T-cell (primary cell): ENCODE measurements at regions of chr16 and their contacts with region 1.

Region 1: DNA sequence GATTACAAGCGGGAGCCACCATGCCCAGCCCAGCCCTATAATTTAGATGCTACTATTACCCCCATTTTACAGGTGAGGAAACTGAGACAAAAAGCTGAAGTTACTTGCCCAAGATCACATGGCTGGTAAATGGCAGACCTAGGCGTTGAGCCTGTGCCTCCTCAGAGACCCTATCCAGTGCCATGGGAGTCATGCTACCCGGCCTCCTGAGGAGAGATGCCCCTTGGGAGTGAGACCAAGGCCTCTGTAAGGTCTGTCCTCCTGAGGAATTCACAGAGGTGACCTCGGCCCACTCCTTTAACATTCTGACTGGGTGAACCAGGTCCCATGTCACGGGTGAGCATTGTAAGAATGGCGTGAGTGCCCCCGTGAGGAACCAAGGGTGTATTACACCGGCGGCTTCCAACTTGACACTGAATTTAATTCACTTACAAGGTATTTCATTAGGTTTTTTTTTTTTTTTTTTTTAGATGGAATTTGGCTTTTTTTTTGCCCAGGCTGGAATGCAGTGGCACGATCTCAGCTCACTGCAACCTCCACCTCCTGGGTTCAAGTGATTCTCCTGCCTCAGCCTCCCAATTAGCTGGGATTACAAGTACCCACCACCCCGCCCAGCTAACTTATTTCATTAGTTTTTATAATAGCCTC is 95.7 kb downstream of the ABCC6 start:
- DNase-seq: peak; percentile 23 to 78 (median 57)
- ATAC-seq: peak; percentile 73 to 85 (median 82)
- H3K4me3 ChIP-seq: no peak overlapping the region
- H3K4me3 Mint-ChIP-seq: no peak overlapping the region
- H3K27ac ChIP-seq: no peak overlapping the region
- H3K27ac Mint-ChIP-seq: peak overlapping the region in 1 of 2 donors; percentile 16
- H3K4me1 ChIP-seq: no peaks in the 10 kb centered on the region
- H3K4me1 Mint-ChIP-seq: peaks cover 0 to 2% (median 2%) of the 10 kb centered on the region in 3 donors
- H3K27me3 ChIP-seq: no peaks in the 10 kb centered on the region
- H3K27me3 Mint-ChIP-seq: no peaks in the 10 kb centered on the region

Region 2: DNA sequence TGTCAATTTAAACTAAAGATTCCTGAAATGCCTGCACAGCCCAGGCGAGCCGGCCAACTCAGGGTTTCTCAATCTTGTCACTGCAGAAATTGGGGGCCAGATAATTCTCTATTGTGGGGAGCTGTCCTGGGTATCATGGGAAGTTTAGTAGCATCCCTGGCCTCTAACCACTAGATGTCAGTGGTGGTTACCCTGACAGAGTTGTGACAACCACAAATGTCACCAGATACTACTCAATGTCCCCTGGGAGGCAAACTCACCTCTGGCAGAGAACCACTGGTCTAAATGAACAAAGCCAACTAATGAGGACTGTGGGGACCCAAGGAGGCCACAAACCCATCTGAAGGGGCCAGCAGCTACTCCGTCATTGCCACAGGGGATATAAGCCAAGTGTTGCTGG is 361.7 kb before region 1 on chr16:
- CTCF ChIA-PET with region 1: interaction called in 1 of 2 experiments, 11 read pairs
- POLR2A ChIA-PET with region 1: no interaction called
- DNase-seq: peak in 17 of 35 experiments; percentile 1 to 59 (median 12)
- ATAC-seq: peak; percentile 32 to 67 (median 59)
- H3K4me3 ChIP-seq: no peak overlapping the region
- H3K4me3 Mint-ChIP-seq: no peak overlapping the region
- H3K27ac ChIP-seq: no peak overlapping the region
- H3K27ac Mint-ChIP-seq: no peak overlapping the region
- H3K4me1 ChIP-seq: no peaks in the 10 kb centered on the region
- H3K4me1 Mint-ChIP-seq: no peaks in the 10 kb centered on the region
- H3K27me3 ChIP-seq: peaks cover 0 to 11% of the 10 kb centered on the region in 2 experiments
- H3K27me3 Mint-ChIP-seq: peaks cover 12 to 18% of the 10 kb centered on the region in 2 donors

Region 3: GRCh38 chr16:16099320-16099719 is 28.3 kb before region 1 on chr16:
- CTCF ChIA-PET with region 1: no interaction called
- POLR2A ChIA-PET with region 1: no interaction called
- DNase-seq: no peak
- ATAC-seq: no peak
- H3K4me3 ChIP-seq: no peak overlapping the region
- H3K4me3 Mint-ChIP-seq: no peak overlapping the region
- H3K27ac ChIP-seq: no peak overlapping the region
- H3K27ac Mint-ChIP-seq: no peak overlapping the region
- H3K4me1 ChIP-seq: no peaks in the 10 kb centered on the region
- H3K4me1 Mint-ChIP-seq: no peaks in the 10 kb centered on the region
- H3K27me3 ChIP-seq: no peaks in the 10 kb centered on the region
- H3K27me3 Mint-ChIP-seq: no peaks in the 10 kb centered on the region

Region 4: GRCh38 chr16:16109453-16110108 is 18.0 kb before region 1 on chr16:
- CTCF ChIA-PET with region 1: no interaction called
- POLR2A ChIA-PET with region 1: no interaction called
- DNase-seq: no peak
- ATAC-seq: no peak
- H3K4me3 ChIP-seq: no peak overlapping the region
- H3K4me3 Mint-ChIP-seq: no peak overlapping the region
- H3K27ac ChIP-seq: no peak overlapping the region
- H3K27ac Mint-ChIP-seq: peak overlapping the region in 1 of 2 donors; percentile 22
- H3K4me1 ChIP-seq: no peaks in the 10 kb centered on the region
- H3K4me1 Mint-ChIP-seq: no peaks in the 10 kb centered on the region
- H3K27me3 ChIP-seq: no peaks in the 10 kb centered on the region
- H3K27me3 Mint-ChIP-seq: no peaks in the 10 kb centered on the region

Region 5: GRCh38 chr16:16145136-16145685 is 17.6 kb after region 1 on chr16:
- CTCF ChIA-PET with region 1: interaction called in 1 of 2 experiments, 11 read pairs
- POLR2A ChIA-PET with region 1: no interaction called
- DNase-seq: no peak
- ATAC-seq: no peak
- H3K4me3 ChIP-seq: no peak overlapping the region
- H3K4me3 Mint-ChIP-seq: no peak overlapping the region
- H3K27ac ChIP-seq: no peak overlapping the region
- H3K27ac Mint-ChIP-seq: no peak overlapping the region
- H3K4me1 ChIP-seq: no peaks in the 10 kb centered on the region
- H3K4me1 Mint-ChIP-seq: no peaks in the 10 kb centered on the region
- H3K27me3 ChIP-seq: no peaks in the 10 kb centered on the region
- H3K27me3 Mint-ChIP-seq: no peaks in the 10 kb centered on the region

Region 6: GRCh38 chr16:16871196-16871595 is 743.6 kb after region 1 on chr16:
- CTCF ChIA-PET with region 1: interaction called in 1 of 2 experiments, 11 read pairs
- POLR2A ChIA-PET with region 1: no interaction called
- DNase-seq: no peak
- ATAC-seq: no peak
- H3K4me3 ChIP-seq: no peak overlapping the region
- H3K4me3 Mint-ChIP-seq: no peak overlapping the region
- H3K27ac ChIP-seq: no peak overlapping the region
- H3K27ac Mint-ChIP-seq: no peak overlapping the region
- H3K4me1 ChIP-seq: no peaks in the 10 kb centered on the region
- H3K4me1 Mint-ChIP-seq: no peaks in the 10 kb centered on the region
- H3K27me3 ChIP-seq: peaks cover 0 to 7% of the 10 kb centered on the region in 2 experiments
- H3K27me3 Mint-ChIP-seq: peaks cover 23 to 30% of the 10 kb centered on the region in 2 donors